ENCODE measurements at regions of chr12 and their contacts with region 1.

Region 1: DNA sequence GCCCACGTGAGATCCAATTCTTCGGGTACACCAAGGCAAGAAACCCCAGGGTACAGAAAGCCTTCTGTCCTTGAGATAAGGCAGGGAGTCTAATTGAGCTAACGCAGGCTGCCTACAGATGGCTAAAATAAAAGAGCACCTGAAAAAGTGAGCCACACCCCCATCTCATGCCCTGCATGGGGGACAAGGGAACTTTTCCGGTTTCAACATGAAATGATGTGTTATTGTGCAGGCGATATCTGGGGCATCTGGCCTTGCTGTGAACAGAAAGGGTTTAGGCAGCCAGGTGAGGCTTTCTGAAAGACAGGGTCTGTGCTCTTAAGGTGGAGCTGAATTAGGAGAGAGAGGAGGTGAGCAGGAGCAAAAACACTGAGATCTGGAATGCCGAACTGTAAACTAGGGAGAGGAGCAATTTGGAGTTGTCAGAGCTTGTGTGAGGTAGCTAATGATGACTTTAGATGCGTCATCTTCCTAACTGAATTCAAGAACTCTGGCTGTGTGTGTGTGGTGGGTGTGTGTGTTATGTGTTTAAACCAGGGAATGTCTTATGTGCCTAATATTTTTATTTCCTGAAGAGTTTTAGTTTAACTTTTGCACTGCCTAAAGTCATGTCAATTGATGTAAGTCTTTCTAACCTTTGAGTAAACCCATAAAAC is 20.1 kb upstream of the LDHB start:
- DNase-seq: no peak
- H3K4me3 Mint-ChIP-seq: no peak overlapping the region
- H3K27ac Mint-ChIP-seq: no peak overlapping the region
- H3K4me1 Mint-ChIP-seq: no peaks in the 10 kb centered on the region
- H3K27me3 Mint-ChIP-seq: peaks cover 2% of the 10 kb centered on the region
- CTCF ChIP-seq: no peak

Region 2: GRCh38 chr12:21248679-21249078 is 429.1 kb before region 1 on chr12:
- CTCF ChIA-PET with region 1: interaction called, 23 read pairs
- POLR2A ChIA-PET with region 1: no interaction called
- intact Hi-C with region 1: loop called (anchors 1 kb)
- DNase-seq: peak; percentile 16
- H3K4me3 Mint-ChIP-seq: no peak overlapping the region
- H3K27ac Mint-ChIP-seq: no peak overlapping the region
- H3K4me1 Mint-ChIP-seq: no peaks in the 10 kb centered on the region
- H3K27me3 Mint-ChIP-seq: peaks cover 38% of the 10 kb centered on the region
- CTCF ChIP-seq: peak; percentile 25

Region 3: GRCh38 chr12:21330682-21331253 is 347.0 kb before region 1 on chr12:
- CTCF ChIA-PET with region 1: no interaction called
- POLR2A ChIA-PET with region 1: no interaction called
- intact Hi-C with region 1: no loop called
- DNase-seq: peak; percentile 30
- H3K4me3 Mint-ChIP-seq: no peak overlapping the region
- H3K27ac Mint-ChIP-seq: no peak overlapping the region
- H3K4me1 Mint-ChIP-seq: no peaks in the 10 kb centered on the region
- H3K27me3 Mint-ChIP-seq: no peaks in the 10 kb centered on the region
- CTCF ChIP-seq: no peak

Region 4: GRCh38 chr12:21607701-21608100 is 70.0 kb before region 1 on chr12:
- CTCF ChIA-PET with region 1: interaction called, 51 read pairs
- POLR2A ChIA-PET with region 1: no interaction called
- intact Hi-C with region 1: loop called (anchors 1 kb)
- DNase-seq: peak; percentile 26
- H3K4me3 Mint-ChIP-seq: no peak overlapping the region
- H3K27ac Mint-ChIP-seq: no peak overlapping the region
- H3K4me1 Mint-ChIP-seq: no peaks in the 10 kb centered on the region
- H3K27me3 Mint-ChIP-seq: no peaks in the 10 kb centered on the region
- CTCF ChIP-seq: peak; percentile 10

Region 5: DNA sequence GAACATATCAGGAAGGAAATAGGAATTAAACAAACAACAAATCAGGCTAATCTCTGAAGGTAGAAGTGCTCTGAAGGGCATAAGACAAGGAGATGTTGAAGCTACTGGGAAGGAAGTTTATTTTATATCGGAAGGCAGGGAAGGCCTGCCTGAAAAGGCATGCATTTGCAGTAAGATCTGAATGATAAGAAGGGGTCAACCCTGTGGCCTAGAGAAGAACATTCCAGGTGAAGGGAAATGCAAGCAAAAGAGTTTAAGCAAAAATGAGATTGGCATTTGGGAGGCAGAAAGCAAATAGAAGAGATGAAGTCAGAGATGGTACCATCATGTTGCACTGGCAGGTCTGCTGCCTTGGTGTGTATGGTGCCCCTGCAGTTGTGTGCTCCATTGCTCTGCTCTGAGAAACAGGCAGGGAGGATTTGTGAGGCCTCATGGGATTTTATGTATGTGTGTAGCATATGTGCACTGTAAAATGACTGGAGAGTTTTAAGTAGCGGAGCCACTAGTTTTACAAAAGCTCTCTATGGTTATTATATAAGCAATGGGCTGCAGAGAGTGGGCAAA is 26.8 kb before region 1 on chr12:
- CTCF ChIA-PET with region 1: interaction called, 14 read pairs
- POLR2A ChIA-PET with region 1: interaction called, 3 read pairs
- intact Hi-C with region 1: no loop called
- DNase-seq: no peak
- H3K4me3 Mint-ChIP-seq: no peak overlapping the region
- H3K27ac Mint-ChIP-seq: peak overlapping the region; percentile 25
- H3K4me1 Mint-ChIP-seq: peaks cover 36% of the 10 kb centered on the region
- H3K27me3 Mint-ChIP-seq: no peaks in the 10 kb centered on the region
- CTCF ChIP-seq: no peak

Region 6: GRCh38 chr12:21690704-21691368 is 13.1 kb after region 1 on chr12:
- CTCF ChIA-PET with region 1: interaction called, 13 read pairs
- POLR2A ChIA-PET with region 1: interaction called, 3 read pairs
- intact Hi-C with region 1: no loop called
- DNase-seq: no peak
- H3K4me3 Mint-ChIP-seq: no peak overlapping the region
- H3K27ac Mint-ChIP-seq: no peak overlapping the region
- H3K4me1 Mint-ChIP-seq: no peaks in the 10 kb centered on the region
- H3K27me3 Mint-ChIP-seq: no peaks in the 10 kb centered on the region
- CTCF ChIP-seq: no peak

Region 7: GRCh38 chr12:21989819-21990412 is 312.2 kb after region 1 on chr12:
- CTCF ChIA-PET with region 1: interaction called, 17 read pairs
- POLR2A ChIA-PET with region 1: no interaction called
- intact Hi-C with region 1: no loop called
- DNase-seq: peak; percentile 39
- H3K4me3 Mint-ChIP-seq: no peak overlapping the region
- H3K27ac Mint-ChIP-seq: no peak overlapping the region
- H3K4me1 Mint-ChIP-seq: no peaks in the 10 kb centered on the region
- H3K27me3 Mint-ChIP-seq: peaks cover 25% of the 10 kb centered on the region
- CTCF ChIP-seq: peak; percentile 57